Activated B cell treated with CpG ODN at 0.5 μM for 24 hours (primary cell): ENCODE measurements at regions of chr3 and their contacts with region 1.

Region 1: GRCh38 chr3:128051837-128052594 is at the start of gene SEC61A1:
- DNase-seq: peak; percentile 97
- ATAC-seq: peak; percentile 95
- H3K4me3 Mint-ChIP-seq: peak within 1 kb of the TSS; percentile 96
- H3K27ac Mint-ChIP-seq: peak within 1 kb of the TSS; percentile 95
- H3K4me1 Mint-ChIP-seq: peaks cover 41% of the 10 kb centered on the region
- H3K27me3 Mint-ChIP-seq: no peaks in the 10 kb centered on the region
- CTCF ChIP-seq: no peak
- total RNA-seq, gene SEC61A1: 83.2 and 84.0 TPM in 2 replicates

Region 2: GRCh38 chr3:126703512-126704462 is 1348.2 kb before region 1 on chr3 and contains the start of gene CHCHD6:
- CTCF ChIA-PET with region 1: no interaction called
- POLR2A ChIA-PET with region 1: no interaction called
- intact Hi-C with region 1: loop called (anchors 5 kb)
- DNase-seq: peak; percentile 94
- ATAC-seq: peak; percentile 96
- H3K4me3 Mint-ChIP-seq: peak within 1 kb of the TSS; percentile 99
- H3K27ac Mint-ChIP-seq: peak within 1 kb of the TSS; percentile 74
- H3K4me1 Mint-ChIP-seq: peaks cover 17% of the 10 kb centered on the region
- H3K27me3 Mint-ChIP-seq: peaks cover 32% of the 10 kb centered on the region
- CTCF ChIP-seq: no peak
- total RNA-seq, gene CHCHD6: 7.5 and 10.0 TPM in 2 replicates

Region 3: GRCh38 chr3:127598841-127599570 is 453.0 kb before region 1 on chr3:
- CTCF ChIA-PET with region 1: no interaction called
- POLR2A ChIA-PET with region 1: interaction called, 4 read pairs
- intact Hi-C with region 1: loop called (anchors 1 kb)
- DNase-seq: no peak
- ATAC-seq: no peak
- H3K4me3 Mint-ChIP-seq: peak overlapping the region; percentile 95
- H3K27ac Mint-ChIP-seq: peak overlapping the region; percentile 93
- H3K4me1 Mint-ChIP-seq: peaks cover 29% of the 10 kb centered on the region
- H3K27me3 Mint-ChIP-seq: no peaks in the 10 kb centered on the region
- CTCF ChIP-seq: no peak

Region 4: DNA sequence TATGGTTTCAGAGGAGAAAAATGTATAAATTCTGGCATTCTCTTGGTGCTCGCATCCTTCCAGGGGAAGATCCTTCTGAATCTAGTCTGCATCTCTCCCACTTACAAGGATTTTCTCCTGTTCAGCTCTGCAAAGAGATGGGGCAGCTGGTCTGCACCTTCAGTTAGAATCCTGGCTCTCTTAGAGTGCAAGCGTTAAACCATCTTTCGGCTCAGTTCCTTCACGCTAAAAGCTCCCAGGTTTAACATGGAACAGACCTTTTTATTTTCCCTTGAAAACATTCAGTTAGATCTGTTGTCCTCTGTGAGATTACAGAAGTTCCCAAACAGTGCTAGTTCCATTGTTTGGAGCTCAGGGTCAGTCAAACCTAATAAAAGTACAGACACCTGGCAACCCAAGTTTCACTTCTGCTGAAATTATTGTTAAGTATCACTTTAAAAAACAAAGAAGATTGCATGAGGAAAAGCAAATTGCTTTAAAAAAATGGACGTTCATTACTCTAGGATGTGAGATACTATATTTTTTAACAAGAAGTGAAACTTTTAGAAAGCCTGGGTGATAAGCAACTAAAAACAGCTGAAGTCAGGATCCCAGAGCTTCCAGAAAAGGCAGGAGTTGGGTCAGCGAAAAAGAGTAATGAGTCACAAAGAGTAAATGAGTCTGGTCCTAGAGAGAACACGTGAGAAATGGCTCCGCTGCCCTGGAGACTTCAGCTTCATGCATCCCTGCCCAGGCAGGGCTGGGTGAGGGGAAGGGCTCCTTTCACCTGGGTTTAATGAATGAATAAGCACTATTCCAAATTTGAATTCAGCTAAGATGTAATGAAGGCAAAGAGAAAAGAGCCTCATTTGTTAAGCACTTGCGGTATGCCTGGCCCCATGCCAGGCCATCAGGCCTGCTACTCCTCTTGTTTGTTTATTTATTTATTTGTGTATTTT is 316.0 kb before region 1 on chr3:
- CTCF ChIA-PET with region 1: no interaction called
- POLR2A ChIA-PET with region 1: no interaction called
- intact Hi-C with region 1: loop called (anchors 5 kb)
- DNase-seq: no peak
- ATAC-seq: peak; percentile 91
- H3K4me3 Mint-ChIP-seq: peak overlapping the region; percentile 77
- H3K27ac Mint-ChIP-seq: peak overlapping the region; percentile 93
- H3K4me1 Mint-ChIP-seq: peaks cover 46% of the 10 kb centered on the region
- H3K27me3 Mint-ChIP-seq: no peaks in the 10 kb centered on the region
- CTCF ChIP-seq: no peak

Region 5: GRCh38 chr3:128123538-128124368 is 71.7 kb after region 1 on chr3 and contains the start of gene RUVBL1:
- CTCF ChIA-PET with region 1: no interaction called
- POLR2A ChIA-PET with region 1: interaction called, 17 read pairs
- intact Hi-C with region 1: loop called (anchors 1 kb)
- DNase-seq: peak; percentile 87
- ATAC-seq: peak; percentile 97
- H3K4me3 Mint-ChIP-seq: peak within 1 kb of the TSS; percentile 97
- H3K27ac Mint-ChIP-seq: peak within 1 kb of the TSS; percentile 93
- H3K4me1 Mint-ChIP-seq: peaks cover 23% of the 10 kb centered on the region
- H3K27me3 Mint-ChIP-seq: no peaks in the 10 kb centered on the region
- CTCF ChIP-seq: no peak
- total RNA-seq, gene RUVBL1: 44.8 and 46.6 TPM in 2 replicates

Region 6: GRCh38 chr3:128322066-128323022 is 270.3 kb after region 1 on chr3:
- CTCF ChIA-PET with region 1: no interaction called
- POLR2A ChIA-PET with region 1: no interaction called
- intact Hi-C with region 1: no loop called
- DNase-seq: no peak
- ATAC-seq: no peak
- H3K4me3 Mint-ChIP-seq: no peak overlapping the region
- H3K27ac Mint-ChIP-seq: no peak overlapping the region
- H3K4me1 Mint-ChIP-seq: no peaks in the 10 kb centered on the region
- H3K27me3 Mint-ChIP-seq: no peaks in the 10 kb centered on the region
- CTCF ChIP-seq: no peak

Region 7: GRCh38 chr3:129278439-129278970 is 1226.5 kb after region 1 on chr3 and contains the start of gene HMCES:
- CTCF ChIA-PET with region 1: no interaction called
- POLR2A ChIA-PET with region 1: no interaction called
- intact Hi-C with region 1: loop called (anchors 5 kb)
- DNase-seq: peak; percentile 91
- ATAC-seq: peak; percentile 62
- H3K4me3 Mint-ChIP-seq: peak within 1 kb of the TSS; percentile 91
- H3K27ac Mint-ChIP-seq: peak within 1 kb of the TSS; percentile 86
- H3K4me1 Mint-ChIP-seq: peaks cover 80% of the 10 kb centered on the region
- H3K27me3 Mint-ChIP-seq: no peaks in the 10 kb centered on the region
- CTCF ChIP-seq: no peak
- total RNA-seq, gene HMCES: 31.7 and 37.2 TPM in 2 replicates